OCI-LY7 (cell line): ENCODE measurements at regions of chr6 and their contacts with region 1.

Region 1: GRCh38 chr6:87870556-87870955 is 168.5 kb upstream of the AKIRIN2 start:
- DNase-seq: no peak
- H3K4me3 ChIP-seq: no peak overlapping the region
- H3K27ac ChIP-seq: no peak overlapping the region
- H3K4me1 ChIP-seq: peaks cover 58% of the 10 kb centered on the region
- CTCF ChIP-seq: no peak

Region 2: DNA sequence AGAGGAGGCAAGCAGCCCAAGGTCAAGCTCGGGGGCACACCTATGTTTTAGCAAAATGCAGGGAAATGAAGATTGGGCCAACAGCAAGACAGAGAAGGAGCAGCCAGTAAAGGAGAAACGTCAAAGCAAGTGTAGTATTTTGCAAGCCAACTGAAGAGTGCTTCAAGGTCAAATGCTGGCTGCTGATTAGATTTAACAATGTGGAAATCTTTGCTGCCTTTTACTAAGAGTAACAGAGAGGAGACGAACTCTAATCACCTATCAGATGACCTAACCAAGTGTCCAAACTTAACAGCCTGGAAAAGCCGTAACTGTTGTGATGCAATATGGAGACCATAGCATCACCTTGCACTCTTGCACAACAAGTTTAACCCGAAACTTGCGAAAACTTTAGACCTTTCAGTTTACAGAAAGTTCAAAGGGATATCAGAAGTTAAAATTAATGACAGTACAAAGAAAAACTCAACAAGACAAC is 199.0 kb before region 1 on chr6:
- CTCF ChIA-PET with region 1: no interaction called
- POLR2A ChIA-PET with region 1: no interaction called
- intact Hi-C with region 1: no loop called
- DNase-seq: no peak
- H3K4me3 ChIP-seq: no peak overlapping the region
- H3K27ac ChIP-seq: no peak overlapping the region
- H3K4me1 ChIP-seq: peaks cover 10% of the 10 kb centered on the region
- CTCF ChIP-seq: no peak

Region 3: GRCh38 chr6:87848574-87848973 is 22.0 kb before region 1 on chr6:
- CTCF ChIA-PET with region 1: interaction called, 3 read pairs
- POLR2A ChIA-PET with region 1: interaction called, 13 read pairs
- intact Hi-C with region 1: no loop called
- DNase-seq: no peak
- H3K4me3 ChIP-seq: no peak overlapping the region
- H3K27ac ChIP-seq: no peak overlapping the region
- H3K4me1 ChIP-seq: peaks cover 10% of the 10 kb centered on the region
- CTCF ChIP-seq: no peak

Region 4: GRCh38 chr6:87856478-87856877 is 14.1 kb before region 1 on chr6:
- CTCF ChIA-PET with region 1: interaction called, 3 read pairs
- POLR2A ChIA-PET with region 1: interaction called, 16 read pairs
- intact Hi-C with region 1: no loop called
- DNase-seq: no peak
- H3K4me3 ChIP-seq: no peak overlapping the region
- H3K27ac ChIP-seq: no peak overlapping the region
- H3K4me1 ChIP-seq: peaks cover 4% of the 10 kb centered on the region
- CTCF ChIP-seq: no peak

Region 5: DNA sequence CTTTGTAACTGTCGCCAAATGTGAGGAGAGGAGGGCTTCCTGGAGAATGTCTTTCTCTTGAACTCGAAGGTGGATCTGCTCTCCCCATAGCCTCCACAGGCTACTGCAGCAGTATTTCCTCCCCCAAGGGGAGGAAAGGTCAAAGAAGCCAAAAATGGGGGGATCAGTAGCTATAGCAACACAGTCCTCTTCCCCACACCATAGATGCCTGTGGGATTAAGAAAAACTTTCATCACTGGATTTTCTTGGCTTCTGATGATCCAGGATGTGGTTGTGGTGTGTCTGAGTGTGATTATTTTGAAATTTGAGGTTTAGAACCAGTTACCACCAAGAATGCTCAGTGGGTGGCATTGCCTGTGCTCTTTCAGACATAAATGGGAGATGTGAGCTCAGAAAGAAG is 37.0 kb after region 1 on chr6:
- CTCF ChIA-PET with region 1: interaction called, 3 read pairs
- POLR2A ChIA-PET with region 1: interaction called, 318 read pairs
- intact Hi-C with region 1: no loop called
- DNase-seq: peak; percentile 72
- H3K4me3 ChIP-seq: no peak overlapping the region
- H3K27ac ChIP-seq: peak overlapping the region; percentile 99
- H3K4me1 ChIP-seq: peaks cover 98% of the 10 kb centered on the region
- CTCF ChIP-seq: no peak

Region 6: DNA sequence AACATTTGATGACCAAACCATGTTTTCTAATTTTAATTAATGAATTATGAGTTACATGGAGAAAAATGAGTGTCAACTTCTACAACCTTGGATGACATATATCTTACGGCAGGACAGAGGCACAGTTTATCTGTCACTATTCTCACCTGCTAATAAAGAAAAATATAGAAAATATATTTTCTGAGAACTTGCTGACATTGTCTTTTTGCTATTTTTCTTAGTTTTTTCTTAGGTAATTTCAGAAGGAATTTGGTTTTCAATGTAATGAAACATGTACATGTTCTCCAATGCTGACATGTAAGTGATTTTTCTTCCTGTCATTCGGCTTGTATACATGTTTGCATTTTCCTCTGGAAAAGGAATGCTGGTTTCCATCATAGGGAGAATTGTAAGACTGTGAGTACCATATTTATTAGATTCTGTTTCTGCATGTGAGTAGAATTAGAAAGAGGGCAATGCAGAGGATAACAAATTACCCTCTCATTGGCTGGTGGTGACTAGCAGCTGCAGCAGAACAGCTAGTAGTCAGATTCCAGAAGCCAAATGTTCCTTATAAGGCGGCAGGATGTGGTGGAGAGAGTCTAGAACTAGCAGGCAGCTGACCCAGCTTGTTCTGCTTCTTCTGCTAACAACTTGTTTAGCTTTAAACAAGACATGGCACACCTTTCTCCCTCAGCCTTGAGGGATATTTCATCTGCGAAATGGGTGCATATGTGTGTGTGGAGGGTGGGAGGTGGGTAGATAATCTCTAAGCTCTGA is 44.3 kb after region 1 on chr6:
- CTCF ChIA-PET with region 1: no interaction called
- POLR2A ChIA-PET with region 1: interaction called, 318 read pairs
- intact Hi-C with region 1: no loop called
- DNase-seq: peak; percentile 58
- H3K4me3 ChIP-seq: no peak overlapping the region
- H3K27ac ChIP-seq: peak overlapping the region; percentile 99
- H3K4me1 ChIP-seq: peaks cover 95% of the 10 kb centered on the region
- CTCF ChIP-seq: no peak

Region 7: GRCh38 chr6:88211446-88211845 is 340.9 kb after region 1 on chr6:
- CTCF ChIA-PET with region 1: no interaction called
- POLR2A ChIA-PET with region 1: no interaction called
- intact Hi-C with region 1: no loop called
- DNase-seq: no peak
- H3K4me3 ChIP-seq: no peak overlapping the region
- H3K27ac ChIP-seq: no peak overlapping the region
- H3K4me1 ChIP-seq: no peaks in the 10 kb centered on the region
- CTCF ChIP-seq: no peak